Calu3 (cell line): ENCODE measurements at regions of chr19 and their contacts with region 1.

Region 1: DNA sequence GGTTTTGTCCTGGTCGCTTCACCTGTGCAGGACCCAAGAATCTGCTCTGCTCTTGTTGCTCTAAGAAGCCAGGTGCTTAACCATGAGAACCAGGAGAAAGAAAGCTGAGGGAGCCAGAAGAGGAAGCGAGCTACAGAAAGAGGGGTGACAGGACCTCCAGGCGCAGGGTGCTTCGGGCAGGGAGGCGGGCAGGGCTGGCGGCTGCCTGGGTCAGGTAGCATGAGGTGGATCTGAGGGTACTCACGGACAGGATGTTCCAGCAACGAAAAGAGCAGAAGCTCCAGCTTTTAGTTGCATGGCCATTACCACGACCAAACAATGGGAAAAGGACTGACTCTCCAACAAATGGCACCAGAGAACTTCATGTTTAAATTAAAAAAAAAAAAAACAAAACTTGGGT is 59.9 kb downstream of the ZNF724 start:
- DNase-seq: no peak
- H3K4me3 Mint-ChIP-seq: no peak overlapping the region
- H3K27ac Mint-ChIP-seq: no peak overlapping the region
- H3K4me1 Mint-ChIP-seq: no peaks in the 10 kb centered on the region
- H3K27me3 Mint-ChIP-seq: no peaks in the 10 kb centered on the region
- CTCF ChIP-seq: no peak

Region 2: GRCh38 chr19:23249911-23250649 is 59.7 kb after region 1 on chr19 and contains the start of gene ZNF724:
- CTCF ChIA-PET with region 1: interaction called, 10 read pairs
- intact Hi-C with region 1: no loop called
- DNase-seq: peak; percentile 87
- H3K4me3 Mint-ChIP-seq: peak within 1 kb of the TSS; percentile 81
- H3K27ac Mint-ChIP-seq: peak within 1 kb of the TSS; percentile 69
- H3K4me1 Mint-ChIP-seq: no peaks in the 10 kb centered on the region
- H3K27me3 Mint-ChIP-seq: no peaks in the 10 kb centered on the region
- CTCF ChIP-seq: no peak
- total RNA-seq, gene ZNF724: 8.2 and 8.6 TPM in 2 replicates